ENCODE measurements at regions of chr2 and their contacts with region 1.

Region 1: DNA sequence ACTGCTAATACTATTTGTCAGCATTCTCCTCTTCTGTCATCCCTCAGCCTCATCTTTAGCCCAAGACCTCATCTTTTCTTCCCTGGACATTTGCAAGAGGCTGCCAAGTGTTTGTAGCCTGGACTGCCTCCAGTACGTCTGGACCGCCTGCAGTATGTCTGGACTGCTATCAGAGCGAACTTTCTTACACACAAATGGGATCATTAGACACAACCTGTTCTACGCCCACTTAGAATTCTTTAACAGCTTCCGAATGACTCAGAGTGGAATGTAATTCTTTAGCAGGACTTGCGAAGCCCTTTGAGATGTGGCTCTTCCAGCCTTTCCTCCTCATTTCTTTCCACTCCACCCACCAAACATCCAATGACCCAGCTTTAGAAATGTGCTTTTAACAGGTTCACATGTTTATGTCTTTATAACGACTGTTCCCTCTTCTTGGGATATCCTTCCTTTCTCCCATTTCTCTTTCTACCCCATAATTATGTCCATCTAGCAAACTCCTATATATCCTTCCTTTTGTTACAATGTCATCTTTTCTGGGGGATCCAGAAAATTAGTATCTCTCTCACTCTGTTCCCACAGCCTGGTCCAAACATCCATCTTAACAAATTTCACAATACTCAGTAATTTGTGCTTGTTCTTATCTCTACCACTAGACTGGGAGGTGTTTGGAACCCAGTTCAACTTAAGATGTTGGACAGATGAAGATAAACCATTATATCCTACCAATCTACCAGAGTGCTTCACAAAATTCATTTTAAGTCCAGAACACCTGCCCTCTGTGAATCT is 171.3 kb upstream of the PGAP1 start:
- DNase-seq: no peak
- H3K4me3 ChIP-seq: no peak overlapping the region
- H3K27ac ChIP-seq: no peak overlapping the region
- H3K4me1 ChIP-seq: no peaks in the 10 kb centered on the region
- H3K27me3 ChIP-seq: no peaks in the 10 kb centered on the region
- CTCF ChIP-seq: no peak
- POLR2A ChIP-seq: no peak

Region 2: DNA sequence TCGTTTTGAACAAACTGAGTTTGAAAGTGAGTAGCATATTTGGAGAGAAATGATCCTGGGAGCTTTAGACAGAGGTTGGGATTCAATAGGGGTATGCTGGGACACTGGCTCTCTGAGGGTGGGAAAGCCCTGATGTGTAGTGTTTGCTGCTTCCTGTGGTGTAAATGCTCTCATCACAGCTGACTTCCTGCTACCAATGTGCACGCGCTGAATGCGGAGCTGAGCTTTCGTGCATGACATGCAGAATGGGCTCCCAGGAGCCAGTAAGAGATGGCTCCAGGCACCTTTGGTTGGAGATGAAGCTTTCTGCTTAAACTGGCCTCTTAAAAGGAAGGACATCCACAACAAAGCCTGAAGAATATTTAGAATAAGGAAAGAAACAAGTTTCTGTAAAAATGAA is 682.4 kb before region 1 on chr2:
- CTCF ChIA-PET with region 1: no interaction called
- POLR2A ChIA-PET with region 1: no interaction called
- dilution Hi-C with region 1: no loop called
- intact Hi-C with region 1: loop called (anchors 5 kb)
- DNase-seq: no peak
- H3K4me3 ChIP-seq: no peak overlapping the region
- H3K27ac ChIP-seq: no peak overlapping the region
- H3K4me1 ChIP-seq: peaks cover 12% of the 10 kb centered on the region
- H3K27me3 ChIP-seq: no peaks in the 10 kb centered on the region
- CTCF ChIP-seq: no peak
- POLR2A ChIP-seq: no peak

Region 3: DNA sequence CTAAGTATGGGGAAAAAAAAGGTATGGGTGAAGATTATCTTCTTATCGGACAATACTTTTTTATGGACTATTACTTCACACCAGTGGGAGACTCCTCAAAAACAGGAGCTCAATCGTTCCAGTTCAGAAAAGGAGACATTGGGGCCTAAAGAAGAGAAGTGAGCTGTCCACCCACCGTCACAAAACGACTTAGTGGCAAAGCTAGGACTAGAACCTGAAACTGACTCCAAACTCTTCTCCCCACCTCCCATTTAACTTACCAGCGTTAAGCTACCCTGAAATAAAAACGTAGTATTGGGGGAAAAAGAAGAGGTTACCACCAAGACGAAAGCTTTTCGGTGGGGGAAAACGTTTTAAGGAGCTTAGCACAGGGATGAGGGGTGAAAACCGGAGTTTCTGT is 298.8 kb before region 1 on chr2:
- CTCF ChIA-PET with region 1: no interaction called
- POLR2A ChIA-PET with region 1: no interaction called
- dilution Hi-C with region 1: no loop called
- intact Hi-C with region 1: no loop called
- DNase-seq: no peak
- H3K4me3 ChIP-seq: peak overlapping the region; percentile 77 to 100 (median 98)
- H3K27ac ChIP-seq: peak overlapping the region; percentile 88
- H3K4me1 ChIP-seq: peaks cover 8% of the 10 kb centered on the region
- H3K27me3 ChIP-seq: no peaks in the 10 kb centered on the region
- CTCF ChIP-seq: no peak
- POLR2A ChIP-seq: no peak

Region 4: GRCh38 chr2:197152451-197153228 is 54.9 kb after region 1 on chr2:
- CTCF ChIA-PET with region 1: no interaction called
- POLR2A ChIA-PET with region 1: no interaction called
- dilution Hi-C with region 1: no loop called
- intact Hi-C with region 1: no loop called
- DNase-seq: no peak
- H3K4me3 ChIP-seq: no peak overlapping the region
- H3K27ac ChIP-seq: no peak overlapping the region
- H3K4me1 ChIP-seq: peaks cover 6% of the 10 kb centered on the region
- H3K27me3 ChIP-seq: no peaks in the 10 kb centered on the region
- CTCF ChIP-seq: no peak
- POLR2A ChIP-seq: no peak

Measured in endothelial cell of umbilical vein (primary cell).